SK-N-SH (cell line): ENCODE measurements at regions of chr13 and their contacts with region 1.

Region 1: DNA sequence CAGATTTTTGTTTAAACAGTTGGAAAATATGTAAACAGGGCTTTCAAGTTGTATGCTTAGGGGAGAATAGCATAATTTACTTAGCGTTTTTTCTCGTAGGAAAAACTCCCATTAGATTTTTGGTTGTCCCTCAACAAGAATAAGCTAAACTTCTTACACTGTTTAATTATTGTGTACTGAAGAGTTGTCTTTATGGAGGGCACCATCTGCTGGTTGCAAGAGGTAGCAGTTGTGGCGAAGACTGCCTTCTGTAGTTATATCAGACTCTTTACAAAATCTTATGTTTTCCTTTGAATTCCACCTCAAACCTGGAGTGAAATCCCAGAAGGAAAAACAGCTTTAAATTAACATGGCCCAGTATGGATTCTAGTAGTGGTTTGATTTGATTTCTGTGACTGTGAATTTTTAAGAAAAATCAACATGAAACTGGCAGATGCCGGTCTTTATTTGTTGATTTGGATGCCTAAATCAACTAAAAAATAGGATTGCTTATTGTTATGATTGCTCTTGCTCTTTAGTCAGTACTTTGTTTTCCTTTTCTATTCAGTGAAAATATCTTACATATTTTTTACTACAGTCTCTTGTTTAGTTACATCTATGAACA is 53.4 kb downstream of the PDS5B start:
- DNase-seq: peak; percentile 33
- H3K4me3 ChIP-seq: no peak overlapping the region
- H3K27ac ChIP-seq: no peak overlapping the region; a peak in 1 of 4 replicates
- H3K4me1 ChIP-seq: peaks cover 6 to 7% of the 10 kb centered on the region in 2 experiments; a peak in 3 of 4 replicates
- H3K27me3 ChIP-seq: no peaks in the 10 kb centered on the region
- CTCF ChIP-seq: peak; percentile 86
- EP300 ChIP-seq: no peak
- RAD21 ChIP-seq: peak; percentile 77

Region 2: DNA sequence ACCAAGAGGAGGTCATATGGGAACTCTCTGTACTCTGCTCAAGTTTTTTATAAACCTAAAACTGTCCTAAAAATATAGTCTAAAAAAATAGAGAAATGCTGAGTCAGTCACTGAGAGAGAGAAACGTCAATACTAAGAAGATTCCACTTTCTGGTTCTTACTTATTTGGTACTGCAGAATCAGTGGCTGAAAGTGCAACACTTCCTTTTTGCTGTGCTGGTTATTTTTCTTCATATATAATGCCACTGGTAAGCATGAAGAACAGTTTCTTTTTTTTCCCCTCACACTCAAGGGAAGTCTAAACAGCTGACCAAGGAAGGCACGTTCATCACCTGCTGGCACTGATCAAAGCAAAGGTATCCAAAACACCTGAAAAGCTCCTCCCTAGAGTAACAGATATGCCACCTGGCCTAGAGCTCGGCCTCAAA is 167.4 kb before region 1 on chr13:
- CTCF ChIA-PET with region 1: no interaction called
- POLR2A ChIA-PET with region 1: no interaction called
- DNase-seq: no peak
- H3K4me3 ChIP-seq: no peak overlapping the region
- H3K27ac ChIP-seq: no peak overlapping the region
- H3K4me1 ChIP-seq: no peaks in the 10 kb centered on the region
- H3K27me3 ChIP-seq: no peaks in the 10 kb centered on the region
- CTCF ChIP-seq: no peak
- EP300 ChIP-seq: no peak
- RAD21 ChIP-seq: no peak

Region 3: GRCh38 chr13:32545083-32545482 is 94.5 kb before region 1 on chr13:
- CTCF ChIA-PET with region 1: no interaction called
- POLR2A ChIA-PET with region 1: no interaction called
- DNase-seq: no peak
- H3K4me3 ChIP-seq: no peak overlapping the region
- H3K27ac ChIP-seq: no peak overlapping the region
- H3K4me1 ChIP-seq: no peaks in the 10 kb centered on the region
- H3K27me3 ChIP-seq: no peaks in the 10 kb centered on the region
- CTCF ChIP-seq: no peak
- EP300 ChIP-seq: no peak
- RAD21 ChIP-seq: no peak

Region 4: DNA sequence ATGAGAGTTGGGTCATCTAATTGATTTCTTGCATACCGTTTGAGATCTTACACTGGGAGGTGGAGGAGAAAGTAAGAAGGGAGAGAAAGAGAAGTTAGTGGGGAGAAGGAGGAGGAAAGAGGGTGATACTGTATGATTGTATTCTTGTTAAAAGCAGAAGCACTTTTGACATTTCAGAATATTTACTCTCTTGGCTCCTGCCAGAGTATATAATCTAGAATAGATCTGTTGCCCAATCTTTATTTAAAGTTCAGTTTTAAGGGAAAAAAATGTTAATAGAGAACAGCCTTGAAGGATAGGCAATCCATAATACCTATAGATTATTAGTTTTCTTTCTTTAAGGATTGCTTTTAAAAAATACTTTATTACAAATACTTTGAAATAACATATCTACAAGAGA is 11.8 kb before region 1 on chr13:
- CTCF ChIA-PET with region 1: interaction called, 11 read pairs
- POLR2A ChIA-PET with region 1: no interaction called
- DNase-seq: no peak
- H3K4me3 ChIP-seq: no peak overlapping the region
- H3K27ac ChIP-seq: no peak overlapping the region
- H3K4me1 ChIP-seq: peaks cover 0 to 2% of the 10 kb centered on the region in 2 experiments; a peak in 1 of 4 replicates
- H3K27me3 ChIP-seq: no peaks in the 10 kb centered on the region
- CTCF ChIP-seq: no peak
- EP300 ChIP-seq: no peak
- RAD21 ChIP-seq: no peak

Region 5: GRCh38 chr13:32650705-32651311 is 11.2 kb after region 1 on chr13:
- CTCF ChIA-PET with region 1: interaction called, 36 read pairs
- POLR2A ChIA-PET with region 1: no interaction called
- DNase-seq: peak; percentile 38
- H3K4me3 ChIP-seq: no peak overlapping the region; a peak in 1 of 4 replicates
- H3K27ac ChIP-seq: peak overlapping the region in 1 of 2 experiments; percentile 34; a peak in 2 of 4 replicates
- H3K4me1 ChIP-seq: peaks cover 7 to 16% of the 10 kb centered on the region in 2 experiments; a peak in 3 of 4 replicates
- H3K27me3 ChIP-seq: no peaks in the 10 kb centered on the region
- CTCF ChIP-seq: peak; percentile 83
- EP300 ChIP-seq: no peak
- RAD21 ChIP-seq: peak; percentile 67

Region 6: DNA sequence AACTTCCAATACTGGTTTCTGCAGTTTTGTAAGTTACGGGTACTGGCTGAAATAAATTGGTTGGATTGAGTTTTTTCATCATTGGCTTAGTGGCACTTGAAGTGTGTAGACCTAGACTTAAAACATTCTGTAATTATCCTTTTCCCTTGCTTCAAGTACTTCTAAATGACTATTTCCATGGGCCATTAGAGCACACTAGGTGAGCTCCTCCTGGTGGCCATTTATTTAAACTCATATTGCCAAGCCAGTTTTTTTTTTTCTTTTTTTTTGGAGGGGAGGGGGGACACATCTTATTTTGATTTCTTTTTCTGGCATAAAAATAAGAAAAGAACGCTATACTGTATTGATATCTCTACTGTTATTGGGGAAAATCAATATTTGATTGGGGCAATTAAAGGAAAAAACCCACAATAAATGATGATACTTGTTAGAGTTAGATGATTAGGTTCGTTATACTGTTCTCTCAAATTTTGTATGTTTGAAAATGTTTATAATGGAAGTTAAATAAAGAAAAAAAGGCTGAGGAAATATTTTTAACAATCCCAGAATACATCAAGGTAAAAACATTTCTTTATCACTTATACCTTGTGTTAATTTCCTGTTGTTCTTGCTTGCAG is 29.5 kb after region 1 on chr13:
- CTCF ChIA-PET with region 1: interaction called, 17 read pairs
- POLR2A ChIA-PET with region 1: no interaction called
- DNase-seq: peak; percentile 36
- H3K4me3 ChIP-seq: no peak overlapping the region
- H3K27ac ChIP-seq: no peak overlapping the region
- H3K4me1 ChIP-seq: no peaks in the 10 kb centered on the region
- H3K27me3 ChIP-seq: no peaks in the 10 kb centered on the region
- CTCF ChIP-seq: peak; percentile 88
- EP300 ChIP-seq: no peak
- RAD21 ChIP-seq: peak; percentile 58

Region 7: DNA sequence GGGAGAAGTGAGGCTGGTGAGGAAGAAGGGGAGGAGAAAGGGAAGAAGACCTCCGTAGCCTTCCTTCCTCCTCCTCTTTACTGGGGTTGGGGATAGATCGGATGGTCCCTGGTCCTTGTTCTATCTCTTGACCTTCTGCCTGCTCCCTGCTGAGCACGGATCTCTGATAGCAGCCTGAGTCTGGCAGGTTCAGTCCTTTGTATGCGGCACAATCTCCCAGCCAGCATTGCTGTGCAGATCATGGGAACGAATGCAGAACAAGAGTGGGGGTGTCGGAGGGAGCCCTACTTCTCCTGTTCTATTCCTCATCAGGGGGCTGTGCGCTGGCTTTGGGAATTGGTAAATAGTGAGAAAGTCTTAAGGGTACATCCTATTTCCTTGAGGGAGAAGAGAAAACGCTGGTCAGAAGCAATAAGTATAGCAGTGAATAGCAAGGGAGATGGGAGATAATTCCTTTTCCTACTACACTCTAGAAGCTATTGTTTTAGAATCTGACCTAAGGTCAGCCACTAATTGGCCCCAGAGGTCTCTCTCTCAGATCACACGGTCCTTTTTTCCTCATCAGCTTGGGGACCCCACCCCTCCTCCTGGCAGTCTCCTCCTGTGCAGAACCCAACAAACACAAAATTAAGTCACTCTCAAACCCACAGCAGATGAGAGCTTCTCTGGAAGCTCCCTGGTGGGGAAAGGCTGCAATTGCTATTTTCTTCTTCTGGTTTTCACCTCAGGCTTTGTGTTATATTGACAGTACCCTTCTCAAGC is 417.6 kb after region 1 on chr13:
- CTCF ChIA-PET with region 1: no interaction called
- POLR2A ChIA-PET with region 1: no interaction called
- DNase-seq: peak; percentile 47
- H3K4me3 ChIP-seq: no peak overlapping the region; a peak in 1 of 4 replicates
- H3K27ac ChIP-seq: no peak overlapping the region
- H3K4me1 ChIP-seq: peaks cover 0 to 3% of the 10 kb centered on the region in 2 experiments; a peak in 1 of 4 replicates
- H3K27me3 ChIP-seq: no peaks in the 10 kb centered on the region
- CTCF ChIP-seq: peak; percentile 43
- EP300 ChIP-seq: no peak
- RAD21 ChIP-seq: peak; percentile 39